ENCODE measurements at regions of chr17 and their contacts with region 1.

Region 1: GRCh38 chr17:27396941-27397340 is 59.3 kb upstream of the KSR1 start:
- DNase-seq: no peak
- H3K4me3 ChIP-seq: no peak overlapping the region
- H3K27ac ChIP-seq: no peak overlapping the region
- H3K4me1 ChIP-seq: peaks cover 0 to 6% (median 0%) of the 10 kb centered on the region in 4 donors
- H3K27me3 ChIP-seq: no peaks in the 10 kb centered on the region
- CTCF ChIP-seq: no peak

Region 2: GRCh38 chr17:27446569-27447301 is 49.8 kb after region 1 on chr17:
- intact Hi-C with region 1: loop called (anchors 5 kb)
- DNase-seq: no peak
- H3K4me3 ChIP-seq: no peak overlapping the region
- H3K27ac ChIP-seq: no peak overlapping the region
- H3K4me1 ChIP-seq: no peaks in the 10 kb centered on the region
- H3K27me3 ChIP-seq: peaks cover 0 to 7% of the 10 kb centered on the region in 2 donors
- CTCF ChIP-seq: no peak